ENCODE measurements at regions of chr1 and their contacts with region 1.

Region 1: GRCh38 chr1:22665752-22666151 is 12.7 kb downstream of the C1QB start:
- DNase-seq: peak; percentile 24
- ATAC-seq: peak; percentile 70
- H3K4me3 ChIP-seq: no peak overlapping the region
- H3K27ac ChIP-seq: no peak overlapping the region
- H3K4me1 ChIP-seq: no peaks in the 10 kb centered on the region
- H3K27me3 ChIP-seq: peaks cover 12% of the 10 kb centered on the region; the same call in 1 of the 2 replicates
- CTCF ChIP-seq: peak; percentile 67 to 78 (median 72); a peak in 5 of 6 replicates
- POLR2A ChIP-seq: no peak
- RAD21 ChIP-seq: peak; percentile 89

Region 2: DNA sequence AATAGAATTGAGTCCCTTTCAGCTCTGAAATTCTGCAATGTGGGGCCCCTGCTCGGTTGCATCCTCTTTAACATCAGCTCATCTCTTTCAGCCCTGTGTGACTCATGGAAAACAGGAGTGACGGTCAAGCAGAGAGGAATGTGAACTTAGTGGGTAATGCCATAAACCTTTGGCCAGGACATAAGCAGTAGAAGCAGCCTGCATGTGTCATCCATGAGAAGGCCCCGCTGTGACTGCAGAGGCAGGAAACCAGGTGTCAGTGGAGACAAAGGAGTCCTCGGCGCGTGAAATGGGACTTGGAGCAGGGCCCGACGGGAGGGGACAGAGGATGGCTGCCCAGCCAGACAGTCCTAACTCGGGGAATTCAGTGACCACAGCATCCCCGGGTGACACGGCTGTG is 23.8 kb after region 1 on chr1:
- CTCF ChIA-PET with region 1: no interaction called
- POLR2A ChIA-PET with region 1: no interaction called
- RAD21 ChIA-PET with region 1: no interaction called
- intact Hi-C with region 1: no loop called
- DNase-seq: peak; percentile 74
- ATAC-seq: peak; percentile 87
- H3K4me3 ChIP-seq: peak overlapping the region; percentile 18 to 38
- H3K27ac ChIP-seq: peak overlapping the region; percentile 2; the same call in 1 of the 2 replicates
- H3K4me1 ChIP-seq: peaks cover 7 to 15% of the 10 kb centered on the region in 2 experiments; a peak in 3 of 4 replicates
- H3K27me3 ChIP-seq: no peaks in the 10 kb centered on the region
- CTCF ChIP-seq: no peak
- POLR2A ChIP-seq: no peak
- RAD21 ChIP-seq: peak; percentile 29; the same call in 1 of the 2 replicates

Region 3: DNA sequence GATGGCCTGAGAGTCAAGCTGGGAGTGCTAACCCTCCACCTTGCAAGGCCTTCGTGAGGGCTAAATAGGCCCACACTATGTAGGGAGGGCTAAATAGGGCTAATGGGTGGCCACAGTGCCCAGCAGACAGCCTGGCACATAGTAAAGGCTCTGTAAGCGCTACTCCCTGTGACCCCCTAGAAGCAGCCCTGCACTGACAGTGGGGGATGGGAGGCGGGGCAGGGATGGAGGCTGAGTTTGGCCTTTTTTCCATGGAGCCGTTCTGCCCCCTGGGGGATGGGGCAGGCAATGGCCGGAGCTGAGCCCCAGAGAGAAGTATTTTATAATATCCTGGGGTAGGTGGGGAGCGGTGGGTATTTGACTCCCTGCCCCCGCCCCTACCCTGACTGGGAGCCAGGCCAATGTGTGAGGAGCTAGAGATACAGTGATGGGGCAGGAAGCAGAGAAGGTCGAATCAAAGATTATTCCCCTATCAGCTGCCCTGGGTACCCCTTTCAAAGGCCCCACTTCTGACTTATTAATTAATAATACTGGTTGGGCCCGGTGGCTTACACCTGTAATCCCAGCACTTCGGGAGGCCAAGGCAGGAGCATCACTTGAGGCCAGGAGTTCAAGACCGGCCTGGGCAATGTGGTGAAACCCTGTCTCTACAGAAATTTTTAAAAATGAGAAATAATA is 264.6 kb after region 1 on chr1:
- CTCF ChIA-PET with region 1: interaction called, 18 read pairs
- POLR2A ChIA-PET with region 1: no interaction called
- RAD21 ChIA-PET with region 1: interaction called in 1 of 2 experiments, 3 read pairs
- intact Hi-C with region 1: loop called (anchors 1 kb)
- DNase-seq: peak; percentile 41
- ATAC-seq: peak; percentile 96
- H3K4me3 ChIP-seq: no peak overlapping the region
- H3K27ac ChIP-seq: no peak overlapping the region
- H3K4me1 ChIP-seq: 0 out of 4 replicates have a peak, but pooled peaks cover 0 to 2% of the 10 kb centered on the region in 2 experiments
- H3K27me3 ChIP-seq: no peaks in the 10 kb centered on the region
- CTCF ChIP-seq: peak; percentile 92 to 93 (median 93)
- POLR2A ChIP-seq: no peak
- RAD21 ChIP-seq: peak; percentile 97

Region 4: DNA sequence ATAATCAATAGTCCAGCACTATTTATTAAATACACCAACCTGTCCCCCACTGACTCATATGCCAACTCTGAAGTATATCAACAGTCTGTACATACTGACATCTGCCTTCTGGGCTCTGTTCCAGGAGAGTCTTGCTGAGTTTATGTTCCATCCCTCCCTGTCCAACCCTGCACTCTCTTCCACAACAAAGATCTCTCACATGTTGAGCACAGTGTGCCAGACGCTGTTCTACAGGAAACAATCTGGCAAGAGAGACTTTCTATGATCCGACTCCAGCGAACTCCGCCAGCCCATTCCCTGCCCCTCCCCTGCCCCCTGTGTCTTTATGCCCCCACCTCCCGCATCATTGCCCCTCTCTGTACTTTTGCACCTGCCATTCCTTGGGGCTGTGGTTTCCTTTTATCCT is 303.6 kb after region 1 on chr1:
- CTCF ChIA-PET with region 1: no interaction called
- POLR2A ChIA-PET with region 1: no interaction called
- RAD21 ChIA-PET with region 1: no interaction called
- intact Hi-C with region 1: loop called (anchors 1 kb)
- DNase-seq: no peak
- ATAC-seq: no peak
- H3K4me3 ChIP-seq: no peak overlapping the region
- H3K27ac ChIP-seq: no peak overlapping the region
- H3K4me1 ChIP-seq: no peaks in the 10 kb centered on the region
- H3K27me3 ChIP-seq: peaks cover 6% of the 10 kb centered on the region; the same call in 1 of the 2 replicates
- CTCF ChIP-seq: no peak
- POLR2A ChIP-seq: no peak
- RAD21 ChIP-seq: no peak